Heart right ventricle (tissue), 16 donors: ENCODE measurements at regions of chr18 and their contacts with region 1.

Region 1: DNA sequence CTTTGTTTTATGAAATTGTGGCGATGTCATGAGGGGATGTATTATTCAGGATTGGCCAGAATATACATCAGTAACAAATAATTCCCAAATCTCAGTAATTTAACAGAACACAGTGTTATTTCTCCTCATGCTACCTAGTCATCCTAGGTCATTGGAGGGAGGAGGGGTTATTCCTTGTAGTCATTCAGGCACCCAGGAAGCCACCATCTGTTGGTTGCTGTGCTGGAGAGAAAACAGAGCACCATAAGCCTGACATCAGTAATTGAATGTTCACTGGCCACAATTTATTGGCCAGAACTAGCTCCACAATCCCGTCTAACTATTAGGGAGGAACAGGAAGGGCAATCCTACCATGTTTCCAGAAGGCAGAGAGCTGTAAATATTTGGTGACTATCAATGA is 303.5 kb upstream of the CELF4 start:
- DNase-seq: no peak
- ATAC-seq: no peak
- H3K4me3 ChIP-seq: no peak overlapping the region
- H3K27ac ChIP-seq: no peak overlapping the region
- H3K4me1 ChIP-seq: no peaks in the 10 kb centered on the region
- H3K27me3 ChIP-seq: no peaks in the 10 kb centered on the region
- CTCF ChIP-seq: no peak

Region 2: GRCh38 chr18:37778417-37779165 is 90.5 kb before region 1 on chr18:
- intact Hi-C with region 1: no loop called
- DNase-seq: peak; percentile 57
- ATAC-seq: peak in 5 of 8 donors; percentile 41 to 64 (median 53)
- H3K4me3 ChIP-seq: no peak overlapping the region
- H3K27ac ChIP-seq: no peak overlapping the region
- H3K4me1 ChIP-seq: no peaks in the 10 kb centered on the region
- H3K27me3 ChIP-seq: peaks cover 0 to 18% (median 4%) of the 10 kb centered on the region in 7 donors
- CTCF ChIP-seq: peak; percentile 52 to 80 (median 67)

Region 3: DNA sequence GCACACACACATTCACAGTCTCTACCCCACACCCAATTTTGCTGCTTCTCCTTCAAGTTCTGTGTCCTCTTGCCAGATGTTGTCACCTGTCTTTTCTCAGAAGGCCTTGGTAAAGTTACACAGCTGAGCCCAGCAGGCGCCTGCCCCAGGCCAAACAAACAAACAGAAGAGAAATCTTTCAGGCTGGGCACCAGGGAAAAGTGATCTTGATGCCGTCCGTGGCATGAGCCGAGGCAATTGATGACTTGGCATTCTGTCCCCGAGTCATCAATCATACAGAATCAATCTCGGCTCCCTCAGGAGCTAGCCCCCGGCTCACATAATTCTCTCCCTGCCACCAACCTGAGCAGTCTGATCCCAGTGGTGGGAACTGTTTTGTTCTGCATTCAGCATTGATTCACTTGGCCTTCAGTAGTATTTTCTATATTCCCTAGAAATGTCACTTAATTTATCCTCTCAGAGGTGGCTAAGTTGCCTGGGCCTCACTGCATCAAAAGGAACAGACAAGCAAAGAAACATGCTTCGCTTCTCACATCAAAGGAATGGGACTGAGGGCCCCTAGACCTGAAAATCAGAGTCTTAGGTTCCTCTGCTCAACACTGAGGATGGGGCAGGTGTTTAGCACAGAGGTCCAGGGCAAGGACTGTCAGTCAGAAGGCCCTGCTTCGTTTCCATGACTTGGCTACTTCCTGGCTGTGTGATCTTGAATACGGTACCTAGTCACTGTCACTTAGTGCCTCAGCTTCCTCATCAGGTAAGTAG is 24.7 kb before region 1 on chr18:
- intact Hi-C with region 1: loop called in 1 of 10 experiments (anchors 2 kb)
- DNase-seq: no peak
- ATAC-seq: no peak
- H3K4me3 ChIP-seq: no peak overlapping the region
- H3K27ac ChIP-seq: no peak overlapping the region
- H3K4me1 ChIP-seq: no peaks in the 10 kb centered on the region
- H3K27me3 ChIP-seq: no peaks in the 10 kb centered on the region
- CTCF ChIP-seq: no peak

Region 4: GRCh38 chr18:38007676-38008330 is 138.8 kb after region 1 on chr18:
- intact Hi-C with region 1: no loop called
- DNase-seq: no peak
- ATAC-seq: no peak
- H3K4me3 ChIP-seq: no peak overlapping the region
- H3K27ac ChIP-seq: no peak overlapping the region
- H3K4me1 ChIP-seq: no peaks in the 10 kb centered on the region
- H3K27me3 ChIP-seq: no peaks in the 10 kb centered on the region
- CTCF ChIP-seq: no peak